Endothelial cell of umbilical vein (primary cell): ENCODE measurements at regions of chr15 and their contacts with region 1.

Region 1: DNA sequence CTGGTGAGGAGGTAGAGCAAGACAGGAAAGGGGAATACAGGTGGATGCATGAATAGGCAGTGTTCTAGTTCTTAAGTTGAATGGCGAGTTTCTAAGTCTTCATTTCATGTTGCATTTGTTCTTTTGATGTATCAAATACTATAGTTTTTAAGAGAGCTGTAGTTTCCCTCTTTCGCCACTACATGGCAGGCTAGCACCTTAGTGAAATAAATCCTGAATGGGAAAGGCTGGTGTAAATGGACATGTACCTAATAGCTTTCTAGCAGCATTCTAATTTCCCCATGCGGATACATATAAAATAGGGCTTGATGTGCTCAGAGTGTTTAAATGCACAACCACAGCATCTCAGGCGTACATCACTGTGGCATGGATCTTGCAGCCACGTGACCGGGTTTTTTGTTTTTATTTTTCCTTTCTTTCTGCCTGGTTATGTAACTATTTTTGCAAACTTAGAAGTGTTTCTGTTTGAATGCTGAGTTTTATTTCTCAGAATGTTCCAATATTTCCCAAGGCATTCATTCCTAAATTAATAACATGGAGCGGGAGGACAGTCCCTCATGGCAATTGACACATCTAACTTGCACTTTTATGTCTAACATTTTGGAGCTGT is 23.5 kb upstream of the CLN6 start:
- DNase-seq: peak; percentile 80
- H3K4me3 ChIP-seq: no peak overlapping the region
- H3K27ac ChIP-seq: no peak overlapping the region
- H3K4me1 ChIP-seq: peaks cover 5% of the 10 kb centered on the region
- H3K27me3 ChIP-seq: peaks cover 7 to 10% of the 10 kb centered on the region in 2 experiments
- CTCF ChIP-seq: peak; percentile 64 to 66
- POLR2A ChIP-seq: no peak

Region 2: DNA sequence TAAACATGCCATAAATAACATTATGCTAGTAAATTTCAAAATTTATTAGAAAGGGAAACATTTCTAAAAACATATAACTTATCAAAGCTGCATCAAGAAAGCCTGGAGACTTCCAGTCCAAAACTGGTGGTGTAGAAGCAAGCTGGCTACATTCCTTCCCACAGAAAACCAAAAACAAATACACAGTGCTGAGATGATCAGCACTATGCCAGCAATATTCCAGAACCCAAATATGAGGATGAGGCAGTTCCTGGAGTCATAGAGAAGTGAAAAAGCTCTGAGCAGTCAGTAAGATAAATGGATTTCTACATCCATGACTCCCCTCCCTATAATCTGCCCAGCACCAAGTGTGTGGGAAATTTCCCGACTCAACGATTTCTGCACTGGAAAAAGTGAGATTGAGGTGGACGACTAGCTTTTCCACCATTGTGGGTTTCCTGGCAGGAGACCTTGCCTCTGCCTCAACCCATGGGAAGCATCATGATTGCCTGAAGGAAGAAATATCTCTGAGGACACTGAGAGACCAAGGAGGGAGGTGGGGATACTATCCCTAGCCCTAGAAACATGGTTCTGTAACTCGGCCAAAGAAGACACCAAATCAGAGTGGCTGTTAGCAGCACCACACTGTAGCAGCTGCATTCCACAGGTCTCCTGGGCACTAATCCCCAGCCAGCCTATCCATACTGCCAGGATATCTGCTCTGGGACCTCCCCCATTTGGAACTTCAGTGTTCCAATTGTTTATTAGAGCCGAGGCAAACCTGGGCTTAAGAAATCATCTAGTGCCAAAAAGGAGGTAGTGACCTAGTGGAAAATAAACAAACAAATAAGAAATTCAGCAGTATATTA is 11.7 kb before region 1 on chr15:
- CTCF ChIA-PET with region 1: interaction called, 17 read pairs
- POLR2A ChIA-PET with region 1: no interaction called
- dilution Hi-C with region 1: no loop called
- intact Hi-C with region 1: no loop called
- DNase-seq: no peak
- H3K4me3 ChIP-seq: no peak overlapping the region
- H3K27ac ChIP-seq: no peak overlapping the region
- H3K4me1 ChIP-seq: no peaks in the 10 kb centered on the region
- H3K27me3 ChIP-seq: no peaks in the 10 kb centered on the region
- CTCF ChIP-seq: no peak
- POLR2A ChIP-seq: no peak

Region 3: GRCh38 chr15:68277603-68278344 is 24.7 kb after region 1 on chr15 and contains the start of gene FEM1B:
- CTCF ChIA-PET with region 1: interaction called, 26 read pairs
- POLR2A ChIA-PET with region 1: interaction called, 4 read pairs
- dilution Hi-C with region 1: no loop called
- intact Hi-C with region 1: no loop called
- DNase-seq: peak; percentile 92
- H3K4me3 ChIP-seq: peak within 1 kb of the TSS; percentile 39 to 85 (median 68)
- H3K27ac ChIP-seq: peak within 1 kb of the TSS; percentile 59
- H3K4me1 ChIP-seq: peaks cover 37% of the 10 kb centered on the region
- H3K27me3 ChIP-seq: no peaks in the 10 kb centered on the region
- CTCF ChIP-seq: peak in 1 of 2 donors; percentile 25
- POLR2A ChIP-seq: peak; percentile 12
- total RNA-seq, gene FEM1B: 33.2 TPM in 2 replicates

Region 4: DNA sequence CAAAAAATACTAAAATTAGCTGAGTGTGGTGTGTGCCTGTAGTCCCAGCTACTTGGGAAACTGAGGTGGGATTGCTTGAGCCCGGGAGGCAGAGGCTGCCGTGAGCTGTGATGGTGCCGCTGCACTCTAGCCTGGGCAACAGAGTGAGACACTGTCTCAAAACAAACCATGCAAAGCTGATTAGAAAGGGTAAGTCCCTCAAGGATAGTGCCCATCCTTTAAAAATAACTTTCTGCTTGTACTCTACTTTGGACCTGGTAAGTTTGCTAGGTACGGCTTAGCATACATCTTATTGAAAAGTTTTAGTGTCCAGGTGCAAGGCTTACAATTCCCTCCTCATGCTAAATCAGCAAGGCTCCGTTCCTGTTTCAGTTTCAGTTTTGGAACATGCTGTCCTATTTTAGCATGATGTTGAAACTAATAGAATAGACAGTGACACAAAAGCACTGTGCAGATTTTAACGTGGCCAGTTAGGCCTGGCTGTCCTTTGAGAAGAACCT is 45.9 kb after region 1 on chr15:
- CTCF ChIA-PET with region 1: interaction called, 24 read pairs
- POLR2A ChIA-PET with region 1: interaction called, 3 read pairs
- dilution Hi-C with region 1: no loop called
- intact Hi-C with region 1: no loop called
- DNase-seq: no peak
- H3K4me3 ChIP-seq: no peak overlapping the region
- H3K27ac ChIP-seq: no peak overlapping the region
- H3K4me1 ChIP-seq: no peaks in the 10 kb centered on the region
- H3K27me3 ChIP-seq: no peaks in the 10 kb centered on the region
- CTCF ChIP-seq: no peak
- POLR2A ChIP-seq: no peak

Region 5: DNA sequence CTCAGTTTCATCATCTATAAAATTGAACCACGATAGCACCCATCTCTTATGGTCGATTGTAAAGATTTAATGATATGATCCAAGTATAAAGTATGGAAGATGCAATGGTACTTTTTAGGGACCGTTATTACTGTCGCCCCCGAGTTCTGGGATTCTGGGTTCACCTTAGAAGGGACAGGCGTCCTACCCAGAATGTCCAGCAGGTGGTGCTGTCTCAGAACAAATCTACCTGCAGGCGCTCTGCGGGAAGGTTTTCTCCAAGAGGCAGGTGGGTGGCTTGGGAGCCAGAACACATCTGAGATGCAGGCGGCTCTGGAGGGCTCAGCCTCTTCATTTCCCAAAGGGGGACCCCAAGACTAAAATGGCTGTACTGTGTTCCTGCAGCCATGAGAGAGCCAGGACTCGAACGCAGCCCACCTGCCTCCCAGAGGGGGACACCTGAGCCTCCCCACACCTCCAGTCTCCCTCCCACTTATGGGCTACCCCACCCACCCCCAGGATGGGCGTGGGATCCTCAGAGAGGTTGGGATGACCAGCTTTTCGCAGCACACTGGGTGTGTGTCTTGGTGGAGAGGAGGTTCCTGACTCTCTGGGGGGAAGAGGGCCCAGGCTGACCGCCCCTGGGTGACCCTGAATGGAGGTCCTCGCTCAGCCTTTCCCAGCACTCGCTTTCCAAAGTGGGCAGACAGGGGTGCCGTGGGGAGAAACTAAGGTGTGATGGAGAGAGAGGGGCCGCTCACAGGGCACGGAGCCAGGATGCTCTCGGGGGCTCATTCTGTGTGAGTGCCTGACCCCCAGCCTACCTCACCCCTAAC is 297.7 kb after region 1 on chr15:
- CTCF ChIA-PET with region 1: interaction called, 33 read pairs
- POLR2A ChIA-PET with region 1: no interaction called
- dilution Hi-C with region 1: no loop called
- intact Hi-C with region 1: loop called (anchors 5 kb)
- DNase-seq: peak; percentile 41
- H3K4me3 ChIP-seq: no peak overlapping the region
- H3K27ac ChIP-seq: no peak overlapping the region
- H3K4me1 ChIP-seq: peaks cover 8% of the 10 kb centered on the region
- H3K27me3 ChIP-seq: peaks cover 5% of the 10 kb centered on the region in 2 experiments
- CTCF ChIP-seq: peak; percentile 80 to 87
- POLR2A ChIP-seq: no peak

Region 6: DNA sequence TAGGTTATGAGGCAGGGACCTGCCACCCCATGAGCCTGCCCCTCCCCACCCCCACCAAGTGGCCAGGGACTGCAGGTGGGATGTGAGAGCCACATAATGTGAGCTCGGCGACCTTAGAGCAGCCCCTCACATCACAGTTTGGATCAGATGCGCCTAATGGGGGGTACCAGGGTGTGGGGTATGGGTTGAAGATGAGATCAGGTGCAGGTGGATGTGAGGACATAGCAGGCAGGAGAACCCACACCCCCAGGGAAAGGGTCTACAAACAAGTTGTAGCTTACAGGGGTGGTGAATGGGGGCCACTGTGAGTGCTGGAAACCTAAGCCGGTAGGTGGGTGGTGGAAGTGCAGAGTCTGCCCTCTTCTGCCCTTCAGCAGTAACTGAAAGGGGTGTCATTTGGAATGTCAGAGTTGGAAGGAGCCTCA is 419.8 kb after region 1 on chr15:
- CTCF ChIA-PET with region 1: interaction called, 29 read pairs
- POLR2A ChIA-PET with region 1: no interaction called
- dilution Hi-C with region 1: no loop called
- intact Hi-C with region 1: loop called (anchors 2 kb)
- DNase-seq: no peak
- H3K4me3 ChIP-seq: no peak overlapping the region
- H3K27ac ChIP-seq: no peak overlapping the region
- H3K4me1 ChIP-seq: no peaks in the 10 kb centered on the region
- H3K27me3 ChIP-seq: peaks cover 0 to 10% of the 10 kb centered on the region in 2 experiments
- CTCF ChIP-seq: peak in 1 of 2 donors; percentile 30
- POLR2A ChIP-seq: no peak

Region 7: GRCh38 chr15:68924866-68925560 is 672.0 kb after region 1 on chr15:
- CTCF ChIA-PET with region 1: interaction called, 38 read pairs
- POLR2A ChIA-PET with region 1: no interaction called
- dilution Hi-C with region 1: no loop called
- intact Hi-C with region 1: no loop called
- DNase-seq: peak; percentile 75
- H3K4me3 ChIP-seq: no peak overlapping the region
- H3K27ac ChIP-seq: no peak overlapping the region
- H3K4me1 ChIP-seq: no peaks in the 10 kb centered on the region
- H3K27me3 ChIP-seq: peaks cover 5 to 37% of the 10 kb centered on the region in 2 experiments
- CTCF ChIP-seq: peak; percentile 72 to 78
- POLR2A ChIP-seq: no peak